Adrenal gland (tissue), 19 donors: ENCODE measurements at regions of chr22 and their contacts with region 1.

Region 1: GRCh38 chr22:36552289-36552688 is 23.3 kb upstream of the EIF3D start:
- DNase-seq: no peak
- H3K4me3 ChIP-seq: no peak overlapping the region
- H3K27ac ChIP-seq: no peak overlapping the region
- H3K4me1 ChIP-seq: no peaks in the 10 kb centered on the region
- H3K27me3 ChIP-seq: peaks cover 12% of the 10 kb centered on the region
- CTCF ChIP-seq: no peak
- POLR2A ChIP-seq: no peak

Region 2: DNA sequence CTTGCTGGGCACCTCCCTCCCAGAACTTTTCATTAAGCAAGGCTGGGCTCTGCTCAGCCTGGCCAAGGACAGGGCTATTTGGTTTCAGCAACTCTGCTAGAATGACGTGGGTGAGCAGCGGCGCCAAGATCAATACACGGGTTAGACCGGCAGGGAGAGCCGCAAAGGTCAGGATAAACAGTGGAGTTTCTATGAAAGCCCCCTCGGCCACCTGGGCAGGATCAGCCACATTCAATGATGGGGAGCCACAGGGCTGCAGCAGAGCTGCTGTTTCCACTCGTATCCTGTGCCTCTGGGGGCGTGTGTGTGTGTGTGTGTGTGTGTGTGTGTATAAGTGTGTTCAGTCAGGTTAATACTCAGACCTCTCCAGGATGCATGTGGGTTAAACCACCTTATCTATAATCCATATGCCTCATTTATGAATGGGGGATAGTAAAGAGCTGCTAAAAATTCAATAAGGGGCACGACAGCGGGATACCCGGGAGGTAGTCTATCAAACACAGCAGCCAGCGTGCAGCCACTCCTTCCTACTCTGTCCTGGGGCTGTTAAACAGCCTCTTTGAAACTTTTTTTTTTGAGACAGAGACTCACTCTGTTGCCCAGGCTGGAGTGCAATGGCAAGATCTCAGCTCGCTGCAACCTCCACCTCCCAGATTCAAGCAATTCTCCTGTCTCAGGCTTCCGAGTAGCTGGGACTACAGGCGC is 199.3 kb before region 1 on chr22:
- intact Hi-C with region 1: no loop called
- DNase-seq: peak; percentile 75 to 93 (median 89)
- H3K4me3 ChIP-seq: no peak overlapping the region
- H3K27ac ChIP-seq: peak overlapping the region; percentile 75 to 98 (median 87)
- H3K4me1 ChIP-seq: peaks cover 68 to 84% of the 10 kb centered on the region in 2 donors
- H3K27me3 ChIP-seq: no peaks in the 10 kb centered on the region
- CTCF ChIP-seq: peak in 3 of 6 experiments; percentile 9 to 25 (median 14)
- POLR2A ChIP-seq: peak in 1 of 2 donors; percentile 47

Region 3: DNA sequence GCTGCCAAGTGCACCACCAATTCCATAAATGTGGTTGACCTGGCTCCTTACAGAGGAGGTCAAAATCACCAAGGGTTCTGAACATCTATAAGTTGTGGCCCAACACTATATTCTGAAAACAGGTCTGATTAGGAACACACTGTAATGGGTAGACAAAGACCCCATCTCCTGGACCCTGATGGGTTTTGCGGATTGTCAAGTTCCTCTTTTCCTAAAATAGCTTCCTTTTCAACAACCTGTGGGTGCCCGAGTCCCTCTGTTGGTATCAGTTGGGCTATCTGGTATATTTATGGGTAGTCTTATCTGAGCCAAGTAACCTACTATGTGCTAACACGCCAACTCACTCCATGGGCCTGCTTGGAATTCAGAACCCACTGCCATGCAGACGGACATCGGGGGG is 161.1 kb after region 1 on chr22:
- intact Hi-C with region 1: loop called in 1 of 2 experiments (anchors 10 kb)
- DNase-seq: no peak
- H3K4me3 ChIP-seq: no peak overlapping the region
- H3K27ac ChIP-seq: no peak overlapping the region
- H3K4me1 ChIP-seq: no peaks in the 10 kb centered on the region
- H3K27me3 ChIP-seq: no peaks in the 10 kb centered on the region
- CTCF ChIP-seq: no peak
- POLR2A ChIP-seq: no peak